Activated naive CD4-positive, alpha-beta T cell treated with anti-CD3 and anti-CD28 coated beads for 36 hours (primary cell): ENCODE measurements at regions of chr14 and their contacts with region 1.

Region 1: DNA sequence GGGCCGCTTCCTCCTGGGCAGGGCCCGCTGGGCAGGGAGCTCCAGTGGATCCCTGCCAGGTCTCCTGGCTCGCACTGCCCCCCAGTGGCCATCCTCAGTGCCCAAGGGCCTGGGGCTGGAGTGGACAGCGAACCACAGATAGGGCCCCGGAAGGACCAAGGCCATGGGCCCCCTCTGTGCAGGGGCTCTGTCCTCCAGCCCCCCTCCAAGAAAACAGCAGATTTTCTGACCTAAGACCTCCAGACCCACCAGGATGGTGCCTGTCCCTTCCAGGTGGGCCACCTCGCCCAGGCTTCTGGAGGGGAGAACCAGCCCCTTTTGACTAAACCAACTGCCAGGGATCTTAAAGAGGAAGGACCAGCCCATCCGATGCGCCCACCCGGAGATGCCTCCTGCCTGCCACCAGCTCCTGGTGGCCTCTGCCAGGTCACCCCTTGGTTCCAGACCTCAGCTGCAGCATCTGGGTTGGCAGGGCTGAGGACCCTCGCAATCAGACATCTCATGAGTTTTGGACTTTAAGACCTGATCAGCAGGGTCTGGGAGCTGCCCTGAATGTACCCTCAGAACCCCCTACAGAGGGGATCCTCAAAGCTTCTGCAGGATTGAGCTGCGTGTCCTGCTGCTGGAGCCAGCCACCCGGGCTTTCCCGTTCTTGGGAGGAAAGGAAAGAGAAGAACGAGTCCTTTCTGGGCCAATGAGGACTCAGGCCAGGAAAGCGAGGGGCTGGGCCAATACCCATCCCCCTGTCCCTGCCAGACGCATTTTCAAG is 325.8 kb upstream of the DIO3 start:
- DNase-seq: peak; percentile 52
- H3K4me3 Mint-ChIP-seq: no peak overlapping the region
- H3K27ac Mint-ChIP-seq: no peak overlapping the region
- H3K4me1 Mint-ChIP-seq: no peaks in the 10 kb centered on the region
- H3K27me3 Mint-ChIP-seq: no peaks in the 10 kb centered on the region

Region 2: DNA sequence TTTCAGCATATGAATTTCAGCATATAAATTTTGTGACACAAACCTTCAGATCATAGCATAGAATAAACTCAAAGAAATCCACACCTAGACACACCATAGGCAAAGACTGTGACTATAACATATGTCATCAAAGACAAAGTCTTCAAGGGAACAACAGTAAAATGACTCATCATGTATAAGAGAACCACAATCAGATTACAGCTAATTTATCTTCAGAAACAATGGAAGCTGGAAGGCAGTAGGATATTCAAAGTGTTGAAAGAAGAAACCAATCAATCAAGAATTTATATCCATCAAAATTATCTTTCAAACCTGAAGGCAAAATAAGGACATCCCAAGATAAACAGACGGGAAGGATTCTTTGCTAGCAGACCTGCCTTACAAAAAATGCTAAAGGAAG is 479.9 kb before region 1 on chr14:
- CTCF ChIA-PET with region 1: no interaction called
- intact Hi-C with region 1: no loop called
- DNase-seq: no peak
- H3K4me3 Mint-ChIP-seq: no peak overlapping the region
- H3K27ac Mint-ChIP-seq: no peak overlapping the region
- H3K4me1 Mint-ChIP-seq: no peaks in the 10 kb centered on the region
- H3K27me3 Mint-ChIP-seq: peaks cover 6% of the 10 kb centered on the region

Region 3: GRCh38 chr14:100900837-100901390 is 334.6 kb before region 1 on chr14:
- CTCF ChIA-PET with region 1: no interaction called
- intact Hi-C with region 1: loop called (anchors 5 kb)
- DNase-seq: peak; percentile 45
- H3K4me3 Mint-ChIP-seq: no peak overlapping the region
- H3K27ac Mint-ChIP-seq: no peak overlapping the region
- H3K4me1 Mint-ChIP-seq: no peaks in the 10 kb centered on the region
- H3K27me3 Mint-ChIP-seq: peaks cover 57% of the 10 kb centered on the region

Region 4: DNA sequence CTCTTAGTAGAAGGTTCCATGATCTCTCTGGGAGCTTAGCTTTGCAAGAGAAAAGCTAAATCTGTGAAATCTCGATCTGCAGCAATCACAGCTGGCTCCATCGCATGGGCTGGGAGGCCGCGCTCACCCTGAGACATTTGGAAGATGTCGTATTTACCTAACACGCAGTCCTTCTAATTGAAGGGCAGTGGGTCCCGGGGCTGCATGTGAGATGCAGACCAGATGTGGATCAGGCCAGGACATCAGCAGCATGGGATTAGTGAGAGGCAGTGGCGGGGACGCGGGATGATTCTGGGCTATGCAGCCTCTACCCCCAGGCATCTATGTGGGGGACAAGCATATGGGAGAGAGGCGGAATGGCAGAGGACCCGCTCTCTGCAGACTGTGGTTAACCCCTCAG is 19.6 kb before region 1 on chr14:
- CTCF ChIA-PET with region 1: no interaction called
- intact Hi-C with region 1: no loop called
- DNase-seq: no peak
- H3K4me3 Mint-ChIP-seq: no peak overlapping the region
- H3K27ac Mint-ChIP-seq: no peak overlapping the region
- H3K4me1 Mint-ChIP-seq: no peaks in the 10 kb centered on the region
- H3K27me3 Mint-ChIP-seq: no peaks in the 10 kb centered on the region